Esophagus squamous epithelium (tissue), 5 donors: ENCODE measurements at regions of chr12 and their contacts with region 1.

Region 1: DNA sequence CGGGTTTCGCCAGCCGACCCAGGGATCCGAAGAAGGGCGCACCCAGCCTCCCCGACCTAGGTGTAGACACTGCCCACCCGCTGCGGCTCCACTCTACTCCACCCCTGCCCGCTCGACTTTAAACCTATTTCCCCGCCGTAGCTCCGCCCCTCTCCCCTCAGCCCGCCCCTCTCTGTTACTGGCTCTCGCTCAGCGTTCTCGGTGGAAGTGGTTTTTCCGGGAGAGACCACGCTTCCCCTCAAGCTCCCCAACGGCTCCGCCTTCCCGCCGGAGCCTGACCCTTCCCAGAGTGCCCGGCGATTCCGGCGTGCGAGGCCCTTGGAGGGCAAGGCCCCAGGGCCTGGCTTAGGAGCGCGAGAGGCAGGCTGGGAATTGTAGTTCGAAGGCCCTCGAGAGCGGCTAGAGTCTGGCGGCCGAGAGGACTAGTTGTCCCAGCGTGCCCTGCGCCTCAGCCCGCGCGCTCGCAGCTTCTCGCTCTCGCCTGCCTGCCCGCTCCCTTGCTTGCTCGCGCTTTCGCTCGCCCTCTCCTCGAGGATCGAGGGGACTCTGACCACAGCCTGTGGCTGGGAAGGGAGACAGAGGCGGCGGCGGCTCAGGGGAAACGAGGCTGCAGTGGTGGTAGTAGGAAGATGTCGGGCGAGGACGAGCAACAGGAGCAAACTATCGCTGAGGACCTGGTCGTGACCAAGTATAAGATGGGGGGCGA is at the start of gene PA2G4:
- DNase-seq: peak; percentile 87
- H3K4me3 ChIP-seq: peak within 1 kb of the TSS; percentile 85 to 97 (median 89)
- H3K27ac ChIP-seq: peak within 1 kb of the TSS; percentile 90 to 95 (median 94)
- H3K4me1 ChIP-seq: peaks cover 10 to 61% (median 25%) of the 10 kb centered on the region in 3 donors
- H3K27me3 ChIP-seq: no peaks in the 10 kb centered on the region
- CTCF ChIP-seq: peak in 3 of 6 experiments; percentile 11 to 25 (median 12)
- POLR2A ChIP-seq: peak in 3 of 4 donors; percentile 63 to 79 (median 73)
- total RNA-seq, gene PA2G4: 89.3 to 206 (median 176) TPM

Region 2: DNA sequence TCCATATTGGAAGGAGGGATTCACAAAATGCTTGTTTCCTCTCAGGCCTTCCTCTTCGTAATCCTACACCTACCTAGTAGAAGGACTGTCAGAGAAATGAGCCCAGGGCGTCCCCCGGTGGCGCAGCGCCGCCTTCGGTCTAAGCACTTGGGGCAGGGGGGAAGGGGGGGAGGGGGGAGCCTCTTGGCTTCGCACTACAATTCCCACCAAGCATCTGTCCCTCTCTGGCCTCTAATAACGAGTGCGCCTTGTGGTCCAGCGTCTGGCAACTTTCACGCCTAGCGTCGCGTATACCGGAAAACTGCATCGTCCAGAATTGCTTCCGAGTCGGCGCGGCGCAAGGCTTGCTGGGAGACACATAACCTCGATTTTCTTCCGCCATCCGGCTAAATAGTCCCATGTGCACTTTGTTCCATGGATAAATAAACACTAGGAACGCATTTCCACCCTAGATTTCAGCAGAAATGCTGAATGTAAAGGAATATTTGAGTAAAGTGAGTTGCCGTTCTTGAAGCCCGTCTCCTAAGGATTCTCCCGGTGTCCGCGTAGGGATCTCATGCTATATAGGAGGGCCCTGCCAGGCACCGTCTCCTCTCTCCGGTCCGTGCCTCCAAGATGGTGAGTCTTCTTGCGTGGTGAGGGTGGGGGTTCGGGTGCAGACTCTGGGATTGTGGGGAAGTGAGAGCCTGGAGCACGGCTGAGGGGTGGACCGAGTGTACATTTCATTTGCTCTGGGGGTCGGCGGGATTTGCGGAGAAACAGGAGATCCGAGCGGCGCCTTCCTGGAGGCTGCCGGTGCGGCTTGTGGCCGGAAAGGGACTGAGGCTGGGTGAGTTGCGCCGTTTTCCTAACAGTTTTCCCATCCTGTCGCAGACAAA is 62.5 kb before region 1 on chr12 and contains the start of gene RPS26:
- intact Hi-C with region 1: loop called (anchors 10 kb)
- DNase-seq: peak; percentile 90
- H3K4me3 ChIP-seq: peak within 1 kb of the TSS; percentile 81 to 89 (median 82)
- H3K27ac ChIP-seq: peak within 1 kb of the TSS; percentile 92 to 99 (median 96)
- H3K4me1 ChIP-seq: peaks cover 9 to 26% (median 18%) of the 10 kb centered on the region in 3 donors
- H3K27me3 ChIP-seq: no peaks in the 10 kb centered on the region
- CTCF ChIP-seq: peak in 3 of 6 experiments; percentile 12 to 61 (median 30)
- POLR2A ChIP-seq: peak in 3 of 4 donors; percentile 14 to 95 (median 84)
- total RNA-seq, gene RPS26: 381 to 1,639 (median 1,040) TPM